ENCODE measurements at regions of chr1 and their contacts with region 1.

Region 1: GRCh38 chr1:42924082-42924850 is 34.4 kb downstream of the SLC2A1 start:
- DNase-seq: peak; percentile 96
- H3K4me3 Mint-ChIP-seq: peak overlapping the region; percentile 61
- H3K27ac Mint-ChIP-seq: peak overlapping the region; percentile 82
- H3K4me1 Mint-ChIP-seq: peaks cover 29% of the 10 kb centered on the region
- H3K27me3 Mint-ChIP-seq: no peaks in the 10 kb centered on the region
- CTCF ChIP-seq: no peak

Region 2: DNA sequence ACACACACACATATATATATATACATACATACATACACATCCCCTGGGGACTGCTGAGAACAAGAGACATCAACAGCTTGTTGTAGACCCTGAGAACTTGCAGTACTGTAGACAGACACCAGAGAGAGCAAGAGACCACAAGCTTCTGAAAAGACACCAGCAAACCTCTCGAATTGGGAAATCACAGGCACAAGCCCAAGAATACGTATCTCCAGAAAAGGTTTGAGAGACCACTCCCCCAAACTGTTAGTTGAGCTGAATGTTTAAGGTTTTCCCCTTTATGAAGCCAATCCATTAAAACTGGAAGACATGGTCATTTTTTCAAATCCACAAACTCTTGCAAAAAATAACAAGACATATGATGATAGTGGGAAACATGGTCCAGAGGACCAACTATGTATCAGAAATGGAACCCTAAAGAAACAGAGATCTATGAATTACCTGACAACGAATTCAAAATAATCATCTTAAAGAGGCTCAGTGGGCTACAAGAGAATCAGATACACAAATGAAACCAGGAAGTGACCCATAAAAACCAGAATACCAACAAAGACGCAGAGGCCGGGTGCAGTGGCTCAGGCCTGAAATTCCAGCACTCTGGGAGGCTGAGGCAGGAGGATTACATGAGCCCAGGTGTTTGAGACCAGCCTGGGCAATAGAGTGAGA is 10.7 kb before region 1 on chr1:
- CTCF ChIA-PET with region 1: interaction called, 20 read pairs
- intact Hi-C with region 1: no loop called
- DNase-seq: peak; percentile 74
- H3K4me3 Mint-ChIP-seq: no peak overlapping the region
- H3K27ac Mint-ChIP-seq: no peak overlapping the region
- H3K4me1 Mint-ChIP-seq: peaks cover 13% of the 10 kb centered on the region
- H3K27me3 Mint-ChIP-seq: no peaks in the 10 kb centered on the region
- CTCF ChIP-seq: peak; percentile 81

Region 3: GRCh38 chr1:42936309-42937078 is 12.2 kb after region 1 on chr1:
- CTCF ChIA-PET with region 1: interaction called, 19 read pairs
- intact Hi-C with region 1: no loop called
- DNase-seq: peak; percentile 35
- H3K4me3 Mint-ChIP-seq: peak overlapping the region; percentile 50
- H3K27ac Mint-ChIP-seq: peak overlapping the region; percentile 87
- H3K4me1 Mint-ChIP-seq: peaks cover 90% of the 10 kb centered on the region
- H3K27me3 Mint-ChIP-seq: no peaks in the 10 kb centered on the region
- CTCF ChIP-seq: no peak

Region 4: DNA sequence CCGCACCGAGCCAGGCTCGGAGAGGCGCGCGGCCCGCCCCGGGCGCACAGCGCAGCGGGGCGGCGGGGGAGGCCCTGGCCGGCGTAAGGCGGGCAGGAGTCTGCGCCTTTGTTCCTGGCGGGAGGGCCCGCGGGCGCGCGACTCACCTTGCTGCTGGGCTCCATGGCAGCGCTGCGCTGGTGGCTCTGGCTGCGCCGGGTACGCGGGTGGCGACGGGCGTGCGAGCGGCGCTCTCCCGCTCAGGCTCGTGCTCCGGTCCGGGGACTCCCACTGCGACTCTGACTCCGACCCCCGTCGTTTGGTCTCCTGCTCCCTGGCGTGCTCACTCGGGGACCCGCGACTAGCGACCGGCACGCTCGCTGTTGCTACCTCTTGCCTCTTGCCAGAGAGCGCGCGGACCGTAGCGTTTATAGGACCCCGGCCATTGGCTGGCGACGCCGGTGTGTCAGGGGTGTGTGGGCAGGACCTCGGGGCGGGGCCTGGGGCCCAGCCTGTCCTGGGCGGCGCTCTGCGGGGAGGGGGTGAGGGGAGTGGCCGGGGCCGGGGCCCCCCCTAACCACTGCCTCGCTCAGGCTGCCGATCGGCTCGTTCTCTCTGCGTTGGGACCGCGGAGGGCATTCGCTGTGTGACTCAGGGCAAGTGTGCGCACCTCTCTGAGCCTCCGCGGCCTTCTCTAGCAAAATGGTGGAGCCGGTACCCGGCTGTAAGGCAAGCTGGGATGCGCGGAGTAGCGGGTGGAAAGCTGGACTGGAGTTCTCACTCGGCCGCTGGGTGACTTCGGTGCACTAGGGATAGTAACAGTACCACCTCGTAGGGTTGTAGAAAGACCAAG is 34.4 kb after region 1 on chr1 and contains the start of gene SLC2A1:
- CTCF ChIA-PET with region 1: interaction called, 3 read pairs
- intact Hi-C with region 1: loop called (anchors 5 kb)
- DNase-seq: peak; percentile 94
- H3K4me3 Mint-ChIP-seq: peak within 1 kb of the TSS; percentile 91
- H3K27ac Mint-ChIP-seq: peak within 1 kb of the TSS; percentile 97
- H3K4me1 Mint-ChIP-seq: peaks cover 41% of the 10 kb centered on the region
- H3K27me3 Mint-ChIP-seq: no peaks in the 10 kb centered on the region
- CTCF ChIP-seq: no peak
- total RNA-seq, gene SLC2A1: 163 and 183 TPM in 2 replicates